ENCODE measurements at regions of chr6 and their contacts with region 1.

Region 1: DNA sequence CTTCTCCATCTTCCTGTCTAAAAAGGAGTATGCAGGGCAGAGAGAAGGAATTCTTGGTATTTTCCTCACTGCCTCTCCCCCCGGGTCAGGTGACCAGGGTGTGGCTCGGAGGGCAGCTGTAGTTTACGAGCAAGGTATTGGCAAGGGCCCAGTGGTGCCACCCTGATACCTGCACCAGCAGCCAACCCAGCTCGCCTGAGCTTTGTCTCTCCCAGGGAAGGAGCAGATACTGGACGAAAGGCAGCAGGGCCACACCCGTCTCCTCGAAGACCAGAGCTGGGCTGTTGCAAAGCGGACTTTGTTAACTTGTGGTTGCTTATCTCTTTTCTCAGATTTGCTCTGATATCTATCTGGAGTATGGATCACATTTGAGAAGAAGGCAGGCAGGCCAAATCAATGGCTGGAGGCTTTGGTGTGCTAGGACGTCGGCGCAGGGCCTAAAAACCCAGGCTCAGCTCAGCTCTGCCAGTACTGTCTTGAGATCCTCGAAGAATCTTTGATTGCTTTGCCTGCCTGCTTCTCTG is 25.4 kb downstream of the KCNK5 start:
- DNase-seq: peak in 2 of 4 experiments; percentile 48 to 52
- ATAC-seq: peak; percentile 37
- H3K4me3 ChIP-seq: no peak overlapping the region
- H3K27ac ChIP-seq: no peak overlapping the region
- H3K4me1 ChIP-seq: peaks cover 45 to 51% of the 10 kb centered on the region in 2 experiments
- H3K27me3 ChIP-seq: no peaks in the 10 kb centered on the region
- CTCF ChIP-seq: no peak
- EP300 ChIP-seq: no peak
- POLR2A ChIP-seq: no peak
- RAD21 ChIP-seq: no peak

Region 2: DNA sequence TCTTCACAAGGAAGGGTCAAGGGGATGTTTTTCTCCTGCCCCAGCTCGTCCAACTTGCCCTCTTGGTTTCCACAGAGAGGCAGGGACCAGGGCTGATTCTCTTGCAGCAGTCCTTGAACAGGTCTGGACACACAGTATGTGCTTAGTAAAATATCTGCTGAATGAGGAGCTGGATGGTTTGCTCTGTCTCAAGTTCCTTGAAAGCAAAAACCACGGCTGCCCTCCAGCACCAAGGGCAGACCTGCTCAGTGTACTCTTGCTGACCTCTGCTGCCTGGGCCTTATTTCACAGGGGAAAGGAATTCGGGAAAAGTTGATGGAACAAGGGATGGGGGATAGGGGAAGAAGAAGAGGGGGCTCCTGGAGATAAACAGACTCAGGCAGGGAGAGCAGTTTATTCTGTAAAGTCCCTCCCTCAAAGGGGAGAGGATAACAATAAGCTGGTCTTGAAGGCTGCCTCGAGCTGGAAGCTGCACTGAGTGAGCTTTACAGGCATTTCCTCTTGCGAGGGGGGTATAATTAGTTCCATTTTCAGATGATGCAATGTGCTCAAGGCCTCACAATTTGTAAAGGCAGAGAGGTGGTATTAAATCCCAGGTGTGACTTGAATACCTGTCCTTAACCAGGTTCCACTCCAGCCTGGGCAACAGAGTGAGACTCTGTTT is 15.1 kb after region 1 on chr6:
- CTCF ChIA-PET with region 1: no interaction called
- POLR2A ChIA-PET with region 1: interaction called, 33 read pairs
- in situ Hi-C with region 1: no loop called
- intact Hi-C with region 1: no loop called
- DNase-seq: no peak
- ATAC-seq: no peak
- H3K4me3 ChIP-seq: no peak overlapping the region
- H3K27ac ChIP-seq: peak overlapping the region; percentile 39; the same call in 2 of the 3 replicates
- H3K4me1 ChIP-seq: peaks cover 61 to 71% of the 10 kb centered on the region in 2 experiments
- H3K27me3 ChIP-seq: no peaks in the 10 kb centered on the region
- CTCF ChIP-seq: peak in 1 of 3 experiments; percentile 22; a peak in 1 of 6 replicates
- EP300 ChIP-seq: no peak
- POLR2A ChIP-seq: no peak
- RAD21 ChIP-seq: peak; percentile 26 to 27; a peak in 3 of 4 replicates

Measured in K562 (cell line).